Ascending aorta (tissue), 2 donors: ENCODE measurements at regions of chr9 and their contacts with region 1.

Region 1: DNA sequence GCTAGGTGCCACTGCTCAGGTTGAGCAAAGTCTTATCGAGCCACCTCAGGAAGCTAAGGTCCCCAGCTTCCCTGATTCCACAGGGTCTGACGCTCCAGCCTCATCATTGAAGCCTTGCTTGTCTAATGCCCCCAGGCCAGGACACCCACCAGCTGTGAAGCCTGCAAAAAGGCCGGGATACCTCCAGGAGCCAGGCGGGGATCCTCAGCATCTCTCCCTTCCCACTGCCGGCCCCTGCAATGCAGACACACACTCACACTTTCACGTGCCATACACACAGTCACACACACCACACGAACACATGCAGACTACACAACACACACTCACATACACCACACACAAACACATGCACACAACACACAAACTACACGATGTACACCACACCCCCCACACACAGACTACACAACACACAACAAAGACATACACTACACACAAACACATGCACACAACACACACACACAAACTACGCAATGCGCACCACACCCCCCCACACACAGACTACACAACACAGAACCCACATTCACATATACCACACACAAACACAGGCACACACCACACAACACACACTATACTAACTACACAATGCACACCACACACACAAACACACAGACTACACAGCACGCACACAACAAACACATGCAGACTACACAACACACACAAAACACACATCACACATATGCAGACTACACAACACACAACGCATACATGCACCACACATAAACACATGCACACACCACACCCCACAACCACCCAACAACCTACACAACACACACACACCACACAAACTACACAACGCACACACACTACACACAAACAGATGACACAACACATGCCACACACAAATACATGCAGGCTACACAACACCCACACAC is 17.8 kb upstream of the S1PR3 start:
- DNase-seq: peak in 1 of 2 donors; percentile 27
- H3K4me3 ChIP-seq: no peak overlapping the region
- H3K27ac ChIP-seq: no peak overlapping the region
- H3K4me1 ChIP-seq: no peaks in the 10 kb centered on the region
- H3K27me3 ChIP-seq: no peaks in the 10 kb centered on the region
- CTCF ChIP-seq: no peak

Region 2: DNA sequence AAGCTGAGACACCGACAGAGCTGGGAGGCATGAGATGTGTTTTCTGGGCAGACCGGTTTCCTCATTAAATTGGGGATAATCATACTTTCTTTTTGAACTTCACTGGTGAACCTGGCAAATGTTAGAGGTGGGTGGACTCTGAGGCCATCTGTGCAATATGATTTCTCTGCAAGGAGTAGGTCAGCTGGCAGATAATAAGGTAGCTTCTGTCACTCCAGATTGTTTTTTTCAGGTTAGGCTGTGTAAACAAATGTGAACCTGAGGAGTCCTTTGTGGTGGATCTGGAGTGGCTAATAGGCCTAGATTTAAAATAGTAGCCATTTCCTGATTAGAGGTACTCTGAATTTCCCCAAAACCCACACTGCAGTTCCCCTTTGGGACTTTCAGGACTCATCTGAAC is 57.6 kb before region 1 on chr9:
- intact Hi-C with region 1: loop called (anchors 10 kb)
- DNase-seq: no peak
- H3K4me3 ChIP-seq: no peak overlapping the region
- H3K27ac ChIP-seq: no peak overlapping the region
- H3K4me1 ChIP-seq: peaks cover 2 to 3% of the 10 kb centered on the region in 2 donors
- H3K27me3 ChIP-seq: no peaks in the 10 kb centered on the region
- CTCF ChIP-seq: no peak